Endothelial cell of umbilical vein (primary cell): ENCODE measurements at regions of chr2 and their contacts with region 1.

Region 1: GRCh38 chr2:127637725-127638252 is 8.2 kb upstream of the GPR17 start:
- DNase-seq: peak; percentile 70
- H3K4me3 ChIP-seq: no peak overlapping the region
- H3K27ac ChIP-seq: peak overlapping the region; percentile 92
- H3K4me1 ChIP-seq: peaks cover 34% of the 10 kb centered on the region
- H3K27me3 ChIP-seq: no peaks in the 10 kb centered on the region
- CTCF ChIP-seq: no peak
- POLR2A ChIP-seq: peak; percentile 84

Region 2: GRCh38 chr2:127526149-127527000 is 111.4 kb before region 1 on chr2 and contains the start of gene IWS1:
- CTCF ChIA-PET with region 1: no interaction called
- POLR2A ChIA-PET with region 1: no interaction called
- dilution Hi-C with region 1: no loop called
- intact Hi-C with region 1: loop called (anchors 1 kb)
- DNase-seq: peak; percentile 98
- H3K4me3 ChIP-seq: peak within 1 kb of the TSS; percentile 78 to 92 (median 88)
- H3K27ac ChIP-seq: peak within 1 kb of the TSS; percentile 100
- H3K4me1 ChIP-seq: peaks cover 11% of the 10 kb centered on the region
- H3K27me3 ChIP-seq: no peaks in the 10 kb centered on the region
- CTCF ChIP-seq: peak in 1 of 2 donors; percentile 14
- POLR2A ChIP-seq: peak; percentile 88
- total RNA-seq, gene IWS1: 44.9 and 51.0 TPM in 2 replicates

Region 3: DNA sequence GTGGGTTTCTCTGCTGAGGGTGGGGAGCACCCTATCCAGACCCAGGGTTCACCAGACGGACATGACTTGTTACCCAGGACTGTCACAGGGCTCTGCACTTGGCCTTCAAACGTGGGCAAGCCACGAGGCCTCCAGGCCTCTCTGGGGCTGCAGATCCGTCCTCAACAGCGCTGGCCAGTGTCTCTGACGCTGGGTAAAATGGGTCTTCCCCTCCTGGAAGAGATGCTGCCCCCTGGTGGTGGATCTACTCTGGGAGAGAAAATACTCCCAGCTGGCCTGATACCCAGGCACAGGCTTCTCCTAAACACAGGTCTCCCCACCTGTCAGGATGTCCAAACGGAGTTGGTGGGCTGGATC is 11.9 kb after region 1 on chr2:
- CTCF ChIA-PET with region 1: interaction called, 57 read pairs
- POLR2A ChIA-PET with region 1: no interaction called
- dilution Hi-C with region 1: no loop called
- intact Hi-C with region 1: no loop called
- DNase-seq: peak; percentile 69
- H3K4me3 ChIP-seq: no peak overlapping the region
- H3K27ac ChIP-seq: no peak overlapping the region
- H3K4me1 ChIP-seq: peaks cover 25% of the 10 kb centered on the region
- H3K27me3 ChIP-seq: no peaks in the 10 kb centered on the region
- CTCF ChIP-seq: peak; percentile 85 to 88
- POLR2A ChIP-seq: no peak

Region 4: DNA sequence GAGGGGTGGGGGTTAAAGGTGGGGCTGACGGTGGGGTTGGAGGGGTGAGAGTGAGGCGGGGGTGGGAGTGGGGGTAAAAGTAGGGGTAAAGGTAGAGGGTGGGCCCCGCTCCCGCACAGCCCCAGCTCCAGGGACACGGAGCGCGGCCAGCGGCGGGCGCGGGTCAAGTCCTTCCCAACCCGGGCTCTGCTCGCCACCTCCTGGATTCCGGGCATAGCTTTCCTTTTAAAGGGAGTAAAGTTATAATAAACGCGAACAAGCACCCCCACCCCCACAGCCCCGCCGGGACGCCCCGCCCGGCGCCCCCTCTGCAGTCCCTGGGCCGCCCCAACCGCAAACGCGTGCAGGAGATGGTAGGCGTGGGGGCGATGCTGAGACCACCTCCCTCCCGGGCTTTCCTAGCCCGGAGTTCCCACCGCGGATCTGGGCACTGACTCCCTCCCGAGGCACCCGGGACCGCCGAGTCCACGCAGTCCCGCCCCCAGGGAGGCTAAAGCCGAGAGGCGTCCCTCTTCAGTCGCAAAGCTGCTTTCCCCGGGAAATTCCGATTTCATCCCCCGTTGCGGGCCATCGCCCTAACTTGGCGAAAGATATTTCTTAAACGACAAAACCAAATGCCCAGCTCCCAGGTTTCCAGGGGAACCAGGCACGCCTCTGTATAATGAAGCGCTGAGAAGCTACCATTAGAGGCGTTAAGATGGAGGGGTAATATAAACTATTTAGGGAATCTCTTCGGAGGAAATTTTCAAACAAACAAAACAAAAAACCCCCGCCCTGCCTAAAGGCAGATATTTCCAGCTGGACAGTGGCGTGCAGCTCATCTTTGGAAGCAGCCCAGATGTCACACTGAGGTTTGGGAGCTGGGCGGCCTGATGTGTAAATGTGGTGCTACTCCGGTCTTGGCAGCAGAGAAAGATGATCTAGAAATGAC is 37.8 kb after region 1 on chr2 and contains the start of gene LIMS2:
- CTCF ChIA-PET with region 1: interaction called, 37 read pairs
- POLR2A ChIA-PET with region 1: no interaction called
- dilution Hi-C with region 1: no loop called
- intact Hi-C with region 1: no loop called
- DNase-seq: peak; percentile 36
- H3K4me3 ChIP-seq: peak within 1 kb of the TSS; percentile 48 to 58 (median 58)
- H3K27ac ChIP-seq: no peak within 1 kb of the TSS
- H3K4me1 ChIP-seq: peaks cover 18% of the 10 kb centered on the region
- H3K27me3 ChIP-seq: no peaks in the 10 kb centered on the region
- CTCF ChIP-seq: peak in 1 of 2 donors; percentile 37
- POLR2A ChIP-seq: no peak
- total RNA-seq, gene LIMS2: 45.7 and 48.3 TPM in 2 replicates

Region 5: GRCh38 chr2:127695491-127696472 is 58.0 kb after region 1 on chr2:
- CTCF ChIA-PET with region 1: interaction called, 10 read pairs
- POLR2A ChIA-PET with region 1: no interaction called
- dilution Hi-C with region 1: no loop called
- intact Hi-C with region 1: loop called (anchors 2 kb)
- DNase-seq: peak; percentile 75
- H3K4me3 ChIP-seq: peak overlapping the region in 2 of 3 experiments; percentile 21 to 22
- H3K27ac ChIP-seq: no peak overlapping the region
- H3K4me1 ChIP-seq: peaks cover 8% of the 10 kb centered on the region
- H3K27me3 ChIP-seq: no peaks in the 10 kb centered on the region
- CTCF ChIP-seq: peak; percentile 60 to 73
- POLR2A ChIP-seq: no peak

Region 6: GRCh38 chr2:127701193-127701650 is 63.4 kb after region 1 on chr2 and contains the start of gene SFT2D3:
- CTCF ChIA-PET with region 1: interaction called, 10 read pairs
- POLR2A ChIA-PET with region 1: no interaction called
- dilution Hi-C with region 1: no loop called
- intact Hi-C with region 1: loop called (anchors 2 kb)
- DNase-seq: peak; percentile 91
- H3K4me3 ChIP-seq: peak within 1 kb of the TSS; percentile 40 to 79 (median 45)
- H3K27ac ChIP-seq: peak within 1 kb of the TSS; percentile 85
- H3K4me1 ChIP-seq: peaks cover 17% of the 10 kb centered on the region
- H3K27me3 ChIP-seq: no peaks in the 10 kb centered on the region
- CTCF ChIP-seq: no peak
- POLR2A ChIP-seq: peak; percentile 99
- total RNA-seq, gene SFT2D3: 4.4 and 4.7 TPM in 2 replicates